Activated naive CD4-positive, alpha-beta T cell treated with anti-CD3 and anti-CD28 coated beads for 36 hours (primary cell): ENCODE measurements at regions of chr16 and their contacts with region 1.

Region 1: GRCh38 chr16:79770244-79771064 is 169.9 kb upstream of the MAF start:
- DNase-seq: peak; percentile 76
- H3K4me3 Mint-ChIP-seq: peak overlapping the region; percentile 79
- H3K27ac Mint-ChIP-seq: no peak overlapping the region
- H3K4me1 Mint-ChIP-seq: peaks cover 14% of the 10 kb centered on the region
- H3K27me3 Mint-ChIP-seq: peaks cover 15% of the 10 kb centered on the region

Region 2: DNA sequence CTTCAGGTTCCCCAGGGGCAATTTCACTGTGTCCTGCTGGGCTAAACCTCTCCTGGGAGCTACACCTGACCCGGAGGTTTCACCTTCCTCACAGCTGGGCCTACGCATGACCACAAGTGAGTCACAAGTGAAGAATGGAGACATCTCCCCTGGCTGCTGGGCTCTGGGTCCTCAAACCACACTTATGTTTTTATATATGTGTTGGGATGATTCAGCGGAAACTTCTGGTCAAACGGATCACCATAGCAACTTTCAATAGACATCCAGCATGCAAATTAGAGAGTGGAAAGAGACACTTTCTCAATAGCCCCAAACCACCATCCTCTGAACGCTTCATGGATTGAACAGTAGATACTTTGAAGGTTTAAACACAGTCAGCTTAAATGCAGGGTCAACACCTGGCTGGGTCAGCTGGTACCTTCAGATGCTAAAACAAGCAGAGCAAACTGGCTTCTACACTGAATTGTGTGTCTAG is 141.9 kb before region 1 on chr16:
- CTCF ChIA-PET with region 1: no interaction called
- intact Hi-C with region 1: loop called (anchors 5 kb)
- DNase-seq: peak; percentile 65
- H3K4me3 Mint-ChIP-seq: no peak overlapping the region
- H3K27ac Mint-ChIP-seq: no peak overlapping the region
- H3K4me1 Mint-ChIP-seq: peaks cover 10% of the 10 kb centered on the region
- H3K27me3 Mint-ChIP-seq: peaks cover 5% of the 10 kb centered on the region